Left cardiac atrium (tissue), 4 donors: ENCODE measurements at regions of chr19 and their contacts with region 1.

Region 1: GRCh38 chr19:32405431-32406161 is at the start of gene DPY19L3:
- DNase-seq: peak; percentile 97
- ATAC-seq: peak; percentile 98
- total RNA-seq, gene DPY19L3: 13.4 to 13.8 TPM

Region 2: DNA sequence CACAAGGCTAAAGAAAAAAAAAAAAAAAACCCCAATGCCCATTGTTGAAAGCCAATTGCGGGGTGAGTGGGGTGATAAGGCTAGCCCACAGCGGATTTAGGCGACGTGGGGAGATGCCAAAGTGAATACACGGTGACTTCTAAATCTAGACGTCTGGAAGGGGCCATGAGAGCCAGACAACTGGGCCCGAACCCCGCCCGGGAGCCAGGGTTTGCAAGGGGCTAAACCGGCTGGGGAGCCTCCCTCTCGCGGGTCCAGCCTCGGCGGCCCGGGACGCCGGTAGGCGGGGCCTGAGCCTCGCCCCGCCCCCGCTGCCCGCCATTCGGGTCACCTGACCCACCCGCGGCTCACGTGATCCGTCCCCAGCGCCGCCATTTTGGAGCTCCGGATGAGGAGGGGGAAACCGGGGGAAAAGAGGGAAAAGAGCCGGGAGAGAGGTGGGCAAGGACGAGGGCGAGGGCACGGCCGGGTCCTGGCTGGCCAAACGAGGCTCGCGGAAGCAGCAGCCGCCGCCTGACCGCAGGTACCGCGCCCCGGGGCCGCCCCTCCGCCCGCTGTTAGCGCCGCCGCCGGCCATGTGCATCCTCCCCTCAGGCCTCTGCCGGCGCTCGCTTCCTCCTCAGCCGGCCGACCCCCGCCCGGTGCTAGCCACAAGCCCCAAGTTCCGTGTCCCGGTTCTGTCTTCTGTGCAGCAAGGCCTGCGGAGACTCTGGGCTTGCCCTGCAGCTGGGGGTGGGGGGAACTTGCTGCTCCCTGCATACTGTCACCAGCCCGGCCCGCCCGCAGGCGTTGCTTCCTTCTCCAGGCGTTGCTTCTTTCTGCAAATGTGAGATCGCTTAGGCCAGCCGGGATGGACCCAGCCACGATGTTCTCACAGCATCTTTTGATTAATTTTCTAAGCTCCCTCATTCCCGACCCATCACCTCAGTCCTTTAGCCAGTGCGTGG is 60.1 kb before region 1 on chr19 and contains the start of gene ZNF507:
- intact Hi-C with region 1: loop called in 1 of 2 experiments (anchors 2 kb)
- DNase-seq: peak; percentile 89
- ATAC-seq: peak; percentile 99
- total RNA-seq, gene ZNF507: 14.3 to 14.7 TPM

Region 3: DNA sequence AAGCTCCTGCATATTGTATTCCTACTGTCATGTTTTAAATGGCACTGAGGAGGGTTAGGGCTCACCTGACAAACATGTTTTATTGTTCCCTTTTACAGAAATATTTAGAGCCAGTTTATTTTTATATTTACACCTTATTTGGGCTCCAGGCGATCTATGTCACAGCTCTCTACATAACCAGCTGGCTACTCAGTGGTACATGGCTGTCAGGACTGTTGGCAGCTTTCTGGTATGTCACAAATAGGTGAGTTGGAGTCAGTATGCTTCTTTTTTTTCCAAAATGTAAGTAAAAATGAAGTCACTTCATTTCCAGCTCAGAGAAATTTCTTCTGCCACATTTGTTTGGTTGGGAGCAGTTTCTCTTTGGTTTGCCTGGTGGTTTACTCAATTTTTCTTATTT is 31.5 kb after region 1 on chr19:
- intact Hi-C with region 1: no loop called
- DNase-seq: no peak
- ATAC-seq: no peak